Endothelial cell of umbilical vein (primary cell): ENCODE measurements at regions of chr13 and their contacts with region 1.

Region 1: DNA sequence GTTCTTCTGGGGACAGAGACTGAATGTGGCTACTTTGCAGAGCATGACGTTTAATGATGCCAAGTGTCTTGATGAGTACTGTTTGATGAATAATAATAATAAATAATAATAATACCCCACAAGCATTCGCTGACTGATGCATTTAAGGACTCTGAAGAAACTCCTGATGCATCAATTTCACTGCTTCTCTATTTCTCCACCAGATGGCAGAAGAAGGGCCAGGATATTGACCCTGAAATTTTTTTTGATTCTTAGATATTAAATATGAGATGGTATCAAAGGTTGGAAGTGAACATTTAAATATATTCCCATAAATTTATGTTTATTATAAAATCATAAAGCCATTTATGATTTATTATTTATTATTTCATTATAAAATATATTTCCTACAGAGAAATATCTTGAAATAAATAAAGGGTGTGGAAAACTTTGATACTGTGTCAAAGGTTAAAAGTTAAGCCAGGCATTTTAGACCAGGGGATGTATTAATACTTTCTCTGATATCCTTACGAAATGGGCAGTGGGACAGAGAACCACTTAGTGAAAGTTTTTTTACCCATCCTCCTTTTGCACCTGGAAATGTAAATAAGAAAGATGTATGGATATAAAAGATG is 170.9 kb downstream of the LACC1 start:
- DNase-seq: peak; percentile 49
- H3K4me3 ChIP-seq: no peak overlapping the region
- H3K27ac ChIP-seq: no peak overlapping the region
- H3K4me1 ChIP-seq: no peaks in the 10 kb centered on the region
- H3K27me3 ChIP-seq: peaks cover 7 to 18% of the 10 kb centered on the region in 2 experiments
- CTCF ChIP-seq: peak; percentile 42 to 49
- POLR2A ChIP-seq: no peak

Region 2: DNA sequence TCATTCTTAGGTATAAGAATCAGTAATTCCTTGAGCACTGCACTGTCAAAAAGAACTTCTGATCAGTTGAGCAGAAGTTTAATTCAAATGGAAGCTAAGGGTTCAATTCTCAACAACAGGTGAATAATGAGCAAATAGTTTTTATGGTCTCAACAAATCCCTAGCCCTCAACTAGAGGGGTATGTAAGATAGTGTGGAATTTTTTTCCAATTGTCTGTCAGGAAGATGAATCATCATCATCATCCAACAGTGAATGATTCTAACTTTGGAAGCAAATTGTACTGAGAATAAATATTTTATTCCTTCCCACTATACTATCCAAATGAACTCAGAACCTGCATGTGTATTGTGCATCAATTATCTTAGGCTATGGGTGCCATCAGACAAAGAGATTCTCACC is 636.4 kb before region 1 on chr13:
- CTCF ChIA-PET with region 1: no interaction called
- POLR2A ChIA-PET with region 1: interaction called, 18 read pairs
- dilution Hi-C with region 1: no loop called
- intact Hi-C with region 1: no loop called
- DNase-seq: no peak
- H3K4me3 ChIP-seq: no peak overlapping the region
- H3K27ac ChIP-seq: no peak overlapping the region
- H3K4me1 ChIP-seq: no peaks in the 10 kb centered on the region
- H3K27me3 ChIP-seq: no peaks in the 10 kb centered on the region
- CTCF ChIP-seq: no peak
- POLR2A ChIP-seq: no peak

Region 3: DNA sequence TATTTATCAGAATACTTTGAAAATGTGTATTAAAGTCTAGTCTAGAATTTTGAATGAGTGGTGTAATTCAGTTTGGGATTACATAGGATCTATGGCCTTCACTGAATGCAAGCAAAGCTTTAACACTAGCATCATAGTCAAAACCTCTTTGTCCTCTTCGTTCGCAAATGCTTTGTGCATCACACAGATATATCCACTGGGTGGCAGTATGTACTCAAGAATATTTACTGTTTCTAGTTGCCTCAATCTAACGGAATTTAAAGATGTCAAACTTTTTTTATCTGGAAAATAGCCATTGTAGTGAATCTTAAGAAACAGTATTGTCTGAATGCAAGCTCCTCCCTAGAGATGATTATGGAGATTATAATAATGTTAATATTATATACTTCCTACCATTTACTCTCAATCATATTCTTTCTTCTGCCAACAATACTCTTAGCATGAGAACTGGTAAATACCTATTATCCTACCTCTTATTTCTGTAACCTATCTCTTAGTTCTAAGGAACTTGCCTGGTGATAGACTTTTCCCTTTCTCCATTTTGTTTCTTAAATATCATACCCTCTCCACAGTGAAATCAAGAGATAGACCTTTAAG is 145.0 kb before region 1 on chr13:
- CTCF ChIA-PET with region 1: interaction called, 51 read pairs
- POLR2A ChIA-PET with region 1: no interaction called
- dilution Hi-C with region 1: no loop called
- intact Hi-C with region 1: loop called (anchors 1 kb)
- DNase-seq: peak; percentile 68
- H3K4me3 ChIP-seq: no peak overlapping the region
- H3K27ac ChIP-seq: no peak overlapping the region
- H3K4me1 ChIP-seq: no peaks in the 10 kb centered on the region
- H3K27me3 ChIP-seq: peaks cover 0 to 6% of the 10 kb centered on the region in 2 experiments
- CTCF ChIP-seq: peak; percentile 43 to 45
- POLR2A ChIP-seq: no peak

Region 4: DNA sequence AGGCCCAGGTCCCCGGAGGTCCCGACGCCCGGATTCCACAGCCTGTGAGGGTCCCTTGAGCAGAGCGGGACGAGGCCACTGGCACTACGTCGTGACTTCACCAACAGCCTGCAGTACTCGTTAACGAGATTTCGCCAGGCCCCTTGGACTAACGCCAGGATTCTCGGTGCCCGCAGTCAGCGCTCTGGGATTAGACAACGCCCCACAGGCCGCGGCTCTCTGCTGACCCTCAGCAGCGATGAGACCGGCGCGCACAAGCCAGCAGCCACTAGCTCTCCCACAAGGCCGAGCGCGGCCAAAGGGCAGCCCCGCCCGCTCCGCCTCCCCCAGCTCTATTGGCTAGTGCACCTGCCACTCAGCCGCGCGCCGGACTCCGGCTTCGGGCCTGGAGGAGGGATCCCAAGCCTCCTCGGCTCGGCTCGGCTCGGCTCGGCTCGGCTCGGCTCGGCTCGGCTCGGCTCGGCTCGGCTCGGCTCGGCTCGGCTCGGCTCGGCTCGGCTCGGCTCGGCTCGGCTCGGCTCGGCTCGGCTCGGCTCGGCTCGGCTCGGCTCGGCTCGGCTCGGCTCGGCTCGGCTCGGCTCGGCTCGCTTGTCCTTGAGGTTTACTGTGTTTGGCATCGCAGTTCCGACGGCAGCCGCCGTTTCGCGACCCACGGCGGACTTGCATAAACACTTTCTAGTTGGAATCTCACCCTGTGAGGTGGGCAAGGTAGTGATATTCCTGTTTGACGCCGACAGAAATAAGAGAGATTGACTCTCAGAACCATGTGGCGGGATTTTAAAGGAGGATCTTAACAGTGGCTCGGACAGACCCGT is 91.4 kb after region 1 on chr13:
- CTCF ChIA-PET with region 1: interaction called, 4 read pairs
- POLR2A ChIA-PET with region 1: no interaction called
- dilution Hi-C with region 1: no loop called
- intact Hi-C with region 1: loop called (anchors 5 kb)
- DNase-seq: peak; percentile 96
- H3K4me3 ChIP-seq: peak overlapping the region; percentile 43 to 68 (median 50)
- H3K27ac ChIP-seq: peak overlapping the region; percentile 71
- H3K4me1 ChIP-seq: peaks cover 18% of the 10 kb centered on the region
- H3K27me3 ChIP-seq: no peaks in the 10 kb centered on the region
- CTCF ChIP-seq: no peak
- POLR2A ChIP-seq: peak; percentile 79

Region 5: DNA sequence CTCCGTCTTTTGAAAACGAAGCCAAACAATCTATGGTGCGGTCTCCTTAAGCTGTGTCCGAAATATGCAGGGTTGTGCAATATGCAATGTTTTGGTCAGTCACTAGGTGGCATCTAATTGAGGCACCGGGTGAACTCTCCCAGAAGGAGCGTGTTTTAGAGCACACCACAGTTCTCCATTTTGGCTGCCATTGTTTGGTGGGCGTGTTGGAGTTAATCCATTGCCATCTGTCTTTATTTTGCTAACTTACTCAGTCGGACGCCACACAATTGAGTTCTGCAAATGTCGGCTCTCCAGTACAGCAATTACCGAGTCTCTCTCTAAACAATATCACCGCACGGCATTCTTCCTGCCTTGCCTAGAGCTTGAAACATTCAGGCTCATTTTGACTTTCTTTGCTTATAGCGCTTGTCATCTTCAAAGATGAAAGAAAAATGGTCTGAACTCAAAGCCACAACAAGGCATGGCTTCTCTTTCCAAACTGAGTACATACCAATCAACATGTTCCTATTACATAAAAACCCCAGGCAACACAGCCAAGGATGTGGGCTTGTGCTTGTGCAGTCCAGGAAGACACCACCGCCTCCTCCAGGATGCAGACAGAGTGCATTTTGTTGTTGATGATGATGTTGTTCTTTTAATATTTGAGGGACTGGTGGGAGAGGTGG is 141.1 kb after region 1 on chr13:
- CTCF ChIA-PET with region 1: interaction called, 5 read pairs
- POLR2A ChIA-PET with region 1: no interaction called
- dilution Hi-C with region 1: no loop called
- intact Hi-C with region 1: loop called (anchors 1 kb)
- DNase-seq: peak; percentile 71
- H3K4me3 ChIP-seq: no peak overlapping the region
- H3K27ac ChIP-seq: no peak overlapping the region
- H3K4me1 ChIP-seq: no peaks in the 10 kb centered on the region
- H3K27me3 ChIP-seq: no peaks in the 10 kb centered on the region
- CTCF ChIP-seq: peak; percentile 46 to 71
- POLR2A ChIP-seq: no peak

Region 6: GRCh38 chr13:44243198-44243857 is 192.8 kb after region 1 on chr13:
- CTCF ChIA-PET with region 1: interaction called, 8 read pairs
- POLR2A ChIA-PET with region 1: no interaction called
- dilution Hi-C with region 1: no loop called
- intact Hi-C with region 1: loop called (anchors 1 kb)
- DNase-seq: peak; percentile 92
- H3K4me3 ChIP-seq: no peak overlapping the region
- H3K27ac ChIP-seq: peak overlapping the region; percentile 69
- H3K4me1 ChIP-seq: peaks cover 11% of the 10 kb centered on the region
- H3K27me3 ChIP-seq: no peaks in the 10 kb centered on the region
- CTCF ChIP-seq: peak; percentile 53 to 73
- POLR2A ChIP-seq: no peak

Region 7: DNA sequence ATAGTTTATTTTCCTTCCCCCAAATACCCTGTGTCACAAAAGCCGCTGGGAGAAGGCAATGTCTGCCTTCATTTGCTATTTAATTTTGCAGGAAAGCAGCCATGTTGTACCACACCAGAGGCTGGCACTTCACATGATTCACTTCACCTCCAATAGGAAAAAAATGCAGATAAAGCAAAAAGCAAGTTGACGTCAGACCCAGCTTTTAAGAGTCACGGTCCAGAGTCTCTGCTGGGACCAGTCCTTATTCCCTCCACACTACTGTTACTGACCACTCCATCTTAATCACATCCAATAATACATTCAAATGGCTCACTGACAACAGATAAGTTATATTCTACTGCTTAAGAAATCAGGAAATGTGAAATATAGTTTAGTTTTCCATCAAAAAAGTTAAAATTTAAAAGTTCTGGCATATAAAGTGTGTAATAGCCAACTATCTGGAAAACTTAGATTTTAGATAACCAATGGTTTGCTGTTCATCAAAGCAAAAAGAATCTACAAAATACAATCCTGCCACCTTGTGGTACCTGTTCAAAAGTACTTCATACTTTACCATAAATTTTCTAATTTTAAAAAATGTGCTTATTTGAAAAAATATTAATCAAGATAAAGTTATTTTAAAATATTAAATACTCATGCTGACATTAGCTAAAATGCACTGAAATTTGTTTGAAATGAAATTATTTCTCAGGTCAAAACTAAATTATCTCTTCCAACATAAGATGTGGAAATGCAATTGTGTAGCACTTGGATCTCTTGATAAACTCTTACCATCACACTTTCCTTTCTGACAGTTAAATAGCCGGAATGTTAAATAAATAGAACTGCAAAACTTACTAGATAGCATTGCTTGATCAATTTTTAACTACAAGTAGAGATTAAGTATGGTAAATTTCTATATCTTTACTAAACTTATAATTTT is 420.3 kb after region 1 on chr13:
- CTCF ChIA-PET with region 1: interaction called, 4 read pairs
- POLR2A ChIA-PET with region 1: no interaction called
- dilution Hi-C with region 1: no loop called
- intact Hi-C with region 1: loop called (anchors 1 kb)
- DNase-seq: peak; percentile 46
- H3K4me3 ChIP-seq: peak overlapping the region in 1 of 3 experiments; percentile 50
- H3K27ac ChIP-seq: peak overlapping the region; percentile 51
- H3K4me1 ChIP-seq: peaks cover 29% of the 10 kb centered on the region
- H3K27me3 ChIP-seq: no peaks in the 10 kb centered on the region
- CTCF ChIP-seq: peak; percentile 6 to 20
- POLR2A ChIP-seq: no peak